ENCODE measurements at regions of chr15 and their contacts with region 1.

Region 1: GRCh38 chr15:73972984-73973682 is 19.0 kb downstream of the STOML1 start:
- DNase-seq: peak; percentile 73
- ATAC-seq: peak; percentile 97
- H3K4me3 ChIP-seq: no peak overlapping the region
- H3K27ac ChIP-seq: no peak overlapping the region
- H3K4me1 ChIP-seq: 0 out of 2 replicates have a peak, but pooled peaks cover 1% of the 10 kb centered on the region
- H3K27me3 ChIP-seq: 0 out of 2 replicates have a peak, but pooled peaks cover 3% of the 10 kb centered on the region
- CTCF ChIP-seq: peak; percentile 98
- POLR2A ChIP-seq: peak; percentile 62
- RAD21 ChIP-seq: peak; percentile 99

Region 2: DNA sequence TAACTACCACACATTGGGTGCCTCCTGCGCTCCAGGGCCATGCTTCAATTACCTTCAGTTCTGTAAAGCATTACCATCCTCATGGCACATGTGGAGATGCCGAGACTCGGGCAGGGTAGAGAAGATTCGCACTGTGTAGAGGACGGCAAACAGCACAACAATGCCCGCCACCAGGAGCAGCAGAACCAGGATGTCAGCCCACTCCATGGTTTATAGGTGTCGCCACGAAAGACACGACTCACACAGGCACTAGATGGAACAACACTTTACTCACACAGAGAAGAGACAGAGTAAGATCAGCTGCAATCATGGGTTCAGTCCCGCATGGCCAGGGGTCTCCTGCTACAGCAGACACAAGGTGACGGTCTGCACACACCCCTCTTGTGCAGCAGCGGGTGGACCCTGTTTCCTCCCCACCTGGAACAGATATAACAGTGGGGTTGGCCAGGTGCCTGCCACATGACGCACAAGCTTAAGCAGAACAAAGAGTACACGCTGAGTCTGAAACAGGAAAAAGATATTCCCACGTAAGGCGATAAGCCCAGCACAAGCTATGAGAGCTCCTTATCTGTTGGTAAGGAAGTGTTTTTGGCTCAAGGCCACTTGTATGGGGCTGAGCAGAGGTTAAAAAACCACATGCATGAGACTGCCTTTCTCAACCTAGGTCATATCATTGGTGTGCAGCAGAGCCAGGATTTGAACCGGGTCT is 102.3 kb before region 1 on chr15:
- CTCF ChIA-PET with region 1: no interaction called
- POLR2A ChIA-PET with region 1: no interaction called
- dilution Hi-C with region 1: no loop called
- in situ Hi-C with region 1: no loop called
- intact Hi-C with region 1: no loop called
- DNase-seq: peak; percentile 18
- ATAC-seq: no peak
- H3K4me3 ChIP-seq: no peak overlapping the region
- H3K27ac ChIP-seq: no peak overlapping the region
- H3K4me1 ChIP-seq: no peaks in the 10 kb centered on the region
- H3K27me3 ChIP-seq: peaks cover 76% of the 10 kb centered on the region
- CTCF ChIP-seq: no peak
- POLR2A ChIP-seq: no peak
- RAD21 ChIP-seq: no peak

Region 3: DNA sequence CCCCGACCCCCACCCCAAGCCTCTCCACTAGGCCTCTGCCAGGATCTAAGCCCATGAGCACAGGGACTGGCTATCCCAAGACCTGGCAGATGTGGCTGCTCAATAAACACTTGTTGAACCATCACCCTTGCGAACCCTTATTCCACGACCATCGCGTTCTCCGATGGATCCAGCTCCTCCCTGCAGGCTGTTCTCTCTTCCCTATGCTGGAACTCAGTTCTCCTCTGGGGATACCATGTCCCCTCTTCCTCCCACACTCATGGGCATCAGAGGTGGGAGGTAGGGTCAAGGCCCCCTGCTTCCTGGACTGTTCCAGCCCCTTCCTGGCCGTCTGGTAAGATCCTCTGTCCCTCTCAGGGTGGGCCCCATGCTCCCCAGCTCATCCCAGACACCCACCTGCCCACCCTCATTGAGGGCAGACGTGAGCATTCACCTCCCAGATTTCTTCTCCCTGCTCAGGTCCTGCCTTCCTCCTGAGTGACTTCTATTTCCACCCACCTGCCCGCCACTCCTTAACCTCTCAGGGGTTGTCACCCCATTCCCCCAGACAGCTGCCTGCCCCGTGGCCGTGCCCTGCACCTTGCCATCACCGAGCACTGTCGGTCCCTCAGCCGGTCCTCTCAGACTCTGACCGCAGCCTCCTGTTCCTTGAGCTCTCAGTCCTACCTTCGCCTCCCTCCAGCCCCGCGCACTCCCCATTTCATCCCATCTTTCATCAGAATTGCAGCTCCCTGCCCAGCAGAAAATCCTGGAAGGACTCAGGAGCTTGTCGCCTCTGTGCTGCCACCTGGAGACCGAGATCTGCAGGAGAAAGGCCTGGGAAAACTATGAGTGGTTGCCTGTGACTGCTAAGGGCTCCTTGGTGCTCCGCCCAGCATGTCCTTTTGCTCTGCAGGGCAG is 63.4 kb after region 1 on chr15:
- CTCF ChIA-PET with region 1: interaction called, 9 read pairs
- POLR2A ChIA-PET with region 1: no interaction called
- dilution Hi-C with region 1: no loop called
- in situ Hi-C with region 1: no loop called
- intact Hi-C with region 1: loop called (anchors 1 kb)
- DNase-seq: peak; percentile 73
- ATAC-seq: peak; percentile 55
- H3K4me3 ChIP-seq: no peak overlapping the region
- H3K27ac ChIP-seq: no peak overlapping the region
- H3K4me1 ChIP-seq: peaks cover 30% of the 10 kb centered on the region
- H3K27me3 ChIP-seq: no peaks in the 10 kb centered on the region
- CTCF ChIP-seq: peak; percentile 69
- POLR2A ChIP-seq: no peak
- RAD21 ChIP-seq: peak; percentile 68

Region 4: DNA sequence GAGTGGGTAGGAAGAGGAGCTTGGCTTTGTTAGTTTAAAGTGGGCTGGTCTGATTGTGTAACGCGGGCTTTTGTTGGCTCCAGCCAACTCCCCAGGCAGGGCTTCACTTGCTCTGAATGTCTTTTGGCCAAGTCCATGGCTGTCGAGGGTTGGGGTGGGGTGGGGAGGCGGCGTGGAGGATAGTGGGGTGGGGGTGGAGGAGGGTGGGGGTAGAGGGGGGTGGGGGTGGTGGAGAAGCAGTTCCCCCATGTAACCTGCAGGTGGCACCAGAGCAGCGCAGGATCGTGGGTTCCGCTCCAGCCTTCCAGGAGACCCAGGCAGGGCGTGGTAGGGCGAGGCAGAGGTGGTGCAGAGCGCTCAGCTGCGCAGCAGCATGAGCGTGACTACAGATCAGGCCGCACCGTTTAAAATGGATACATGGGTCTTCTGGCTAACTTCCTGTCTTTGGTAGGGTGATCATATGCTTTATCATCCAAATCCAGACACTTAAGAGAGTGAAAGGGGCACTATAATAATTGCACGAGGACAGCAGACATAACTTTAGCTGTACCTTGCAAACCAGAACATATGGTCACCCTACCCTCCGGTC is 80.9 kb after region 1 on chr15:
- CTCF ChIA-PET with region 1: interaction called, 11 read pairs
- POLR2A ChIA-PET with region 1: no interaction called
- dilution Hi-C with region 1: no loop called
- in situ Hi-C with region 1: no loop called
- intact Hi-C with region 1: loop called (anchors 5 kb)
- DNase-seq: peak; percentile 44
- ATAC-seq: peak; percentile 73
- H3K4me3 ChIP-seq: no peak overlapping the region
- H3K27ac ChIP-seq: no peak overlapping the region
- H3K4me1 ChIP-seq: peaks cover 25% of the 10 kb centered on the region
- H3K27me3 ChIP-seq: peaks cover 7% of the 10 kb centered on the region
- CTCF ChIP-seq: peak; percentile 63
- POLR2A ChIP-seq: no peak
- RAD21 ChIP-seq: peak; percentile 78

Region 5: DNA sequence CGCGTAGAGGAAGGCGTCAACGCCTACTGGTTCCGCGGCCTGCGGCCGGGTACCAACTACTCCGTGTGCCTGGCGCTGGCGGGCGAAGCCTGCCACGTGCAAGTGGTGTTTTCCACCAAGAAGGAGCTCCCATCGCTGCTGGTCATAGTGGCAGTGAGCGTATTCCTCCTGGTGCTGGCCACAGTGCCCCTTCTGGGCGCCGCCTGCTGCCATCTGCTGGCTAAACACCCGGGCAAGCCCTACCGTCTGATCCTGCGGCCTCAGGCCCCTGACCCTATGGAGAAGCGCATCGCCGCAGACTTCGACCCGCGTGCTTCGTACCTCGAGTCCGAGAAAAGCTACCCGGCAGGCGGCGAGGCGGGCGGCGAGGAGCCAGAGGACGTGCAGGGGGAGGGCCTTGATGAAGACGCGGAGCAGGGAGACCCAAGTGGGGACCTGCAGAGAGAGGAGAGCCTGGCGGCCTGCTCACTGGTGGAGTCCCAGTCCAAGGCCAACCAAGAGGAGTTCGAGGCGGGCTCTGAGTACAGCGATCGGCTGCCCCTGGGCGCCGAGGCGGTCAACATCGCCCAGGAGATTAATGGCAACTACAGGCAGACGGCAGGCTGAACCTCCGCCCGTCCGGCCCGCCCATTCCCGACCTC is 161.4 kb after region 1 on chr15:
- CTCF ChIA-PET with region 1: no interaction called
- POLR2A ChIA-PET with region 1: no interaction called
- dilution Hi-C with region 1: no loop called
- in situ Hi-C with region 1: loop called (anchors 5 kb)
- intact Hi-C with region 1: loop called (anchors 1 kb)
- DNase-seq: peak; percentile 23
- ATAC-seq: peak; percentile 72
- H3K4me3 ChIP-seq: no peak overlapping the region
- H3K27ac ChIP-seq: no peak overlapping the region
- H3K4me1 ChIP-seq: no peaks in the 10 kb centered on the region; the same call in 1 of the 2 replicates
- H3K27me3 ChIP-seq: peaks cover 89% of the 10 kb centered on the region
- CTCF ChIP-seq: peak; percentile 49
- POLR2A ChIP-seq: no peak
- RAD21 ChIP-seq: peak; percentile 44

Region 6: GRCh38 chr15:74322181-74323076 is 349.3 kb after region 1 on chr15:
- CTCF ChIA-PET with region 1: interaction called, 13 read pairs
- POLR2A ChIA-PET with region 1: no interaction called
- dilution Hi-C with region 1: no loop called
- in situ Hi-C with region 1: loop called (anchors 5 kb)
- intact Hi-C with region 1: loop called (anchors 1 kb)
- DNase-seq: peak; percentile 58
- ATAC-seq: peak; percentile 87
- H3K4me3 ChIP-seq: no peak overlapping the region
- H3K27ac ChIP-seq: no peak overlapping the region
- H3K4me1 ChIP-seq: peaks cover 10% of the 10 kb centered on the region; the same call in 1 of the 2 replicates
- H3K27me3 ChIP-seq: peaks cover 22% of the 10 kb centered on the region
- CTCF ChIP-seq: peak; percentile 96
- POLR2A ChIP-seq: peak; percentile 36; the same call in 1 of the 2 replicates
- RAD21 ChIP-seq: peak; percentile 98